OCI-LY7 (cell line): ENCODE measurements at regions of chr14 and their contacts with region 1.

Region 1: DNA sequence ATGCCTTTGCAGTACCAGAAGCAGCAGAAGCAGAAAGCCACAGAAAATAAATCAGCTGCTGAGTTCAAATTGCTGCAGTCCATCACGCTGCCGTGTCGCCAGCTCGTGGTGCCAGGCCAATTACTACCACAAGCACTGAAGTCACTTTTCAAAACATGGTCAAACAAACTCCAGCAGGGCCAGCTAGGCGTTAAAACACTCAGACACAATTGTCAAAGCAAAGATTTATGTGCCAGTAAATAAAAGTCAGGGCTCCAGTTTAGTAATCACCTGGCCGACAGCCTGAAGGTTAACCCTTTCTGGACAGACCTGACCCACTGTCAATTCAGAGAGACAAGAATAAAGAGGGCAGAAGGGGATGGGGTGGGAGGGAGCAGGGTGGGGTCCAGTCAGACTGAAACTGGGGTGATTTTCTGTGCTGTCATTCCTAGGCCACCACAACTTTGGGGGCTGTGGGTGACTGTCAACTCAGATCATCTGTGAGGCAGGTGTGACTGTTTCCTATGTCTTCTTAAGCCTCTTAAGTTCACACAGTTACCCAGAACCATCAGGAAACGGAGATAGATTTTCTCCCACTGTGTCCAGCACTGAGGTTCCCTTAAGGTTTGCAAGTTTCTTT is 109.8 kb upstream of the FUT8 start:
- DNase-seq: peak; percentile 82
- H3K4me3 ChIP-seq: peak overlapping the region; percentile 61
- H3K27ac ChIP-seq: peak overlapping the region; percentile 99
- H3K4me1 ChIP-seq: peaks cover 98% of the 10 kb centered on the region
- CTCF ChIP-seq: no peak

Region 2: GRCh38 chr14:65170768-65171507 is 131.7 kb before region 1 on chr14:
- CTCF ChIA-PET with region 1: interaction called, 3 read pairs
- POLR2A ChIA-PET with region 1: interaction called, 4 read pairs
- intact Hi-C with region 1: loop called (anchors 5 kb)
- DNase-seq: peak; percentile 27
- H3K4me3 ChIP-seq: peak overlapping the region; percentile 41
- H3K27ac ChIP-seq: no peak overlapping the region
- H3K4me1 ChIP-seq: peaks cover 46% of the 10 kb centered on the region
- CTCF ChIP-seq: peak; percentile 66

Region 3: GRCh38 chr14:65281991-65282895 is 20.4 kb before region 1 on chr14:
- CTCF ChIA-PET with region 1: interaction called, 3 read pairs
- POLR2A ChIA-PET with region 1: interaction called, 160 read pairs
- intact Hi-C with region 1: loop called (anchors 1 kb)
- DNase-seq: peak; percentile 58
- H3K4me3 ChIP-seq: peak overlapping the region; percentile 34
- H3K27ac ChIP-seq: peak overlapping the region; percentile 51
- H3K4me1 ChIP-seq: peaks cover 55% of the 10 kb centered on the region
- CTCF ChIP-seq: no peak

Region 4: DNA sequence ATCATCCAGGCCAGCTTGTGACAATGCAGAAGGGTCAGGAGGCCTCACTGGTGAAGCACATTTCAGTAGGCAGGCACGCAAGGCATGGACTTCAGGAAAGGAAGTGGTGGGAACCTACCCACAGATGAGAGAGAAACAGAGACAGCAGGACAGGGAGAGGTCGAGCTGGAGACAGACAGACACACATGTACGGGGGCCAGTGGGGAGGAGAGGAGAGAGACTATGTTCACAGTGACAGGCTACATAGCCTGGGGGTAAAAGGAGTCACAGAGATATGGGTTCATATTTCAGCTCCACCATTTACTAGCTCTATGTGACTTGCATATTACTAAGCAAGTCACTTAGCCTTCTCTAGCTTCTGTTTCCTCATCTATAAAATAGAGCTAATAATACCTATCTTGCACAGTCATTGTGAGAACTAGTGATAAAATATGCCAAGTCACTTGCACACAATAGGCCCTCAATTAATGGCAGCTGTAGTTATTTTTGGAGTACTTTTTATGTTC is 18.7 kb after region 1 on chr14:
- CTCF ChIA-PET with region 1: interaction called, 6 read pairs
- POLR2A ChIA-PET with region 1: interaction called, 378 read pairs
- intact Hi-C with region 1: loop called (anchors 1 kb)
- DNase-seq: peak; percentile 38
- H3K4me3 ChIP-seq: peak overlapping the region; percentile 11
- H3K27ac ChIP-seq: peak overlapping the region; percentile 96
- H3K4me1 ChIP-seq: peaks cover 89% of the 10 kb centered on the region
- CTCF ChIP-seq: no peak

Region 5: GRCh38 chr14:65356327-65356852 is 53.7 kb after region 1 on chr14:
- CTCF ChIA-PET with region 1: interaction called, 8 read pairs
- POLR2A ChIA-PET with region 1: interaction called, 138 read pairs
- intact Hi-C with region 1: loop called (anchors 1 kb)
- DNase-seq: peak; percentile 54
- H3K4me3 ChIP-seq: peak overlapping the region; percentile 38
- H3K27ac ChIP-seq: peak overlapping the region; percentile 97
- H3K4me1 ChIP-seq: peaks cover 98% of the 10 kb centered on the region
- CTCF ChIP-seq: no peak

Region 6: DNA sequence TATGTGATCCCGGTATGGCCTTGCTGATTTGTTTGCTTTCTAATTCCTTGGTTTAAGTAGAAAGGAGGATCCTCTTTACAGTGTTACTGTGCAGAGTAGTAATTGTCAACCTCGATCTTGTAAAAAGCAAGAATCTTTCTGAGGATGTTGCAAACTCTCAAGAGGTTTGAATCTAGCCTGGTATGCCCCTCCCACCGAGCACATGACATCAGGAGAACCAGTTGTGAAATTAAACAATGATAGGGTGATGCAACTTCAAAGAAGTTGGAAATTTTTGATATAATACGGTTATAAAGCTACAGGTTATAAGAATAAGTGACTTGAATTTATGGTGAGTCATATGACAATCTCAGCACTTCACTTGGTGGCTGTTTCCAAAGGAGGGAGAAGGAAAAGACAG is 74.9 kb after region 1 on chr14:
- CTCF ChIA-PET with region 1: no interaction called
- POLR2A ChIA-PET with region 1: interaction called, 10 read pairs
- intact Hi-C with region 1: no loop called
- DNase-seq: no peak
- H3K4me3 ChIP-seq: no peak overlapping the region
- H3K27ac ChIP-seq: no peak overlapping the region
- H3K4me1 ChIP-seq: peaks cover 22% of the 10 kb centered on the region
- CTCF ChIP-seq: no peak